GM10248 (cell line): ENCODE measurements at regions of chr15 and their contacts with region 1.

Region 1: GRCh38 chr15:90362936-90363212 is 10.8 kb downstream of the ZNF774 start:
- DNase-seq: no peak
- CTCF ChIP-seq: no peak

Region 2: GRCh38 chr15:90376789-90377188 is 13.9 kb after region 1 on chr15:
- CTCF ChIA-PET with region 1: interaction called, 40 read pairs
- POLR2A ChIA-PET with region 1: interaction called, 4 read pairs
- DNase-seq: no peak
- CTCF ChIP-seq: no peak